ENCODE measurements at regions of chr5 and their contacts with region 1.

Region 1: GRCh38 chr5:122933956-122934355 is 88.5 kb downstream of the SNX24 start:
- DNase-seq: no peak
- ATAC-seq: no peak
- H3K4me3 ChIP-seq: no peak overlapping the region
- H3K27ac ChIP-seq: no peak overlapping the region
- H3K4me1 ChIP-seq: no peaks in the 10 kb centered on the region
- H3K27me3 ChIP-seq: no peaks in the 10 kb centered on the region
- CTCF ChIP-seq: no peak

Region 2: GRCh38 chr5:122584411-122585300 is 349.3 kb before region 1 on chr5:
- intact Hi-C with region 1: loop called in 1 of 2 experiments (anchors 5 kb)
- DNase-seq: no peak
- ATAC-seq: no peak
- H3K4me3 ChIP-seq: no peak overlapping the region
- H3K27ac ChIP-seq: no peak overlapping the region
- H3K4me1 ChIP-seq: no peaks in the 10 kb centered on the region
- H3K27me3 ChIP-seq: no peaks in the 10 kb centered on the region
- CTCF ChIP-seq: no peak

Region 3: GRCh38 chr5:123344816-123345426 is 411.0 kb after region 1 on chr5:
- intact Hi-C with region 1: no loop called
- DNase-seq: no peak
- ATAC-seq: no peak
- H3K4me3 ChIP-seq: no peak overlapping the region
- H3K27ac ChIP-seq: no peak overlapping the region
- H3K4me1 ChIP-seq: no peaks in the 10 kb centered on the region
- H3K27me3 ChIP-seq: no peaks in the 10 kb centered on the region
- CTCF ChIP-seq: peak; percentile 46

Measured in psoas muscle (tissue), 8 donors.